ENCODE measurements at regions of chr22 and their contacts with region 1.

Region 1: DNA sequence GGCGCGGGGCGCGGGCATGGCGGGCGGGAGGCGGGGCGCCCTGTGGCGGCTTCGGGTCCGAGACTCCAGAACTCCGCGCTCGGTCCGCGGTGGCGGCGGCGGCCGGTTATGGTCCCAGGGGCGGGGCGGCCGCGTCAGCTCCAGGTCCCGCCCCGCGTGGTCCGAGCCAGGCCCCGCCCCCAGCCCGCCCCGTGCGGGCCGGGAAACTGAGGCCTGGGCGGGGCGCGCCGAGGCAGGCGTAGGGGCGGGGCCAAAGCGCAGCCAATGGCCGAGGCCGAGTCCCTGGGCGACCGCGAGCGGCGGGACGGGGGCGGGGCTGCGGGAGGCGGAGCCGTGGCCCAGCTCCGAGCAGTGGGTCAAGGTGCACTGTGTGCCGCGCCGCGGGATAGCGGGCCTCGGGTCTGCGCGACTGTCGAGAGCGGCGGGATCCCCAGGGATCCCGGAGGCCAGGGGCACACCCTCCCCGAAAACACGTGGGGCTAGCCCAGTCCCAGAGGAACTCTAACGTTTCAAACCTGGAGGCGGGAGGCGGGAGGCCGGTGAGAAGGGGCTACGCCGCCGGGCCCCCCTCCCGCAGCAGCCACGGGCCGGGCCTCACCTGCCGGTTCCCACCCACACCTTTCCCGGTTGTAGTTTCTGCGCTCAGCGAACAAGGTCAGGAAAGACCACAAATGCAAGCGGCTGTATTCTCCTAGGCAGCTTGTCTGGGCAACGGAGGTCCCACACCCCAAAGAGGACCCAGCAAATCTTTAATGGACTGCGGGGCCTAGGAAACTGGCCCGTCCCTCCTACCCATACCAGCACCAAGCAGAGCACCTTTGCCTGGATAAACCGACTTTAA is at the start of gene SLC25A1:
- DNase-seq: peak; percentile 95
- total RNA-seq, gene SLC25A1: 22.2 TPM

Region 2: GRCh38 chr22:19122143-19122751 is 56.6 kb before region 1 on chr22 and contains the start of gene DGCR2:
- intact Hi-C with region 1: loop called (anchors 5 kb)
- DNase-seq: peak; percentile 99
- total RNA-seq, gene DGCR2: 35.2 TPM

Region 3: GRCh38 chr22:19138217-19139000 is 40.5 kb before region 1 on chr22:
- intact Hi-C with region 1: no loop called
- DNase-seq: no peak

Region 4: GRCh38 chr22:19168211-19168890 is 10.5 kb before region 1 on chr22:
- intact Hi-C with region 1: loop called (anchors 2 kb)
- DNase-seq: no peak

Region 5: GRCh38 chr22:19447388-19448075 is 268.7 kb after region 1 on chr22 and contains the start of gene C22orf39:
- intact Hi-C with region 1: loop called (anchors 5 kb)
- DNase-seq: peak; percentile 95
- total RNA-seq, gene C22orf39: 48.7 TPM